ENCODE measurements at regions of chr3 and their contacts with region 1.

Region 1: DNA sequence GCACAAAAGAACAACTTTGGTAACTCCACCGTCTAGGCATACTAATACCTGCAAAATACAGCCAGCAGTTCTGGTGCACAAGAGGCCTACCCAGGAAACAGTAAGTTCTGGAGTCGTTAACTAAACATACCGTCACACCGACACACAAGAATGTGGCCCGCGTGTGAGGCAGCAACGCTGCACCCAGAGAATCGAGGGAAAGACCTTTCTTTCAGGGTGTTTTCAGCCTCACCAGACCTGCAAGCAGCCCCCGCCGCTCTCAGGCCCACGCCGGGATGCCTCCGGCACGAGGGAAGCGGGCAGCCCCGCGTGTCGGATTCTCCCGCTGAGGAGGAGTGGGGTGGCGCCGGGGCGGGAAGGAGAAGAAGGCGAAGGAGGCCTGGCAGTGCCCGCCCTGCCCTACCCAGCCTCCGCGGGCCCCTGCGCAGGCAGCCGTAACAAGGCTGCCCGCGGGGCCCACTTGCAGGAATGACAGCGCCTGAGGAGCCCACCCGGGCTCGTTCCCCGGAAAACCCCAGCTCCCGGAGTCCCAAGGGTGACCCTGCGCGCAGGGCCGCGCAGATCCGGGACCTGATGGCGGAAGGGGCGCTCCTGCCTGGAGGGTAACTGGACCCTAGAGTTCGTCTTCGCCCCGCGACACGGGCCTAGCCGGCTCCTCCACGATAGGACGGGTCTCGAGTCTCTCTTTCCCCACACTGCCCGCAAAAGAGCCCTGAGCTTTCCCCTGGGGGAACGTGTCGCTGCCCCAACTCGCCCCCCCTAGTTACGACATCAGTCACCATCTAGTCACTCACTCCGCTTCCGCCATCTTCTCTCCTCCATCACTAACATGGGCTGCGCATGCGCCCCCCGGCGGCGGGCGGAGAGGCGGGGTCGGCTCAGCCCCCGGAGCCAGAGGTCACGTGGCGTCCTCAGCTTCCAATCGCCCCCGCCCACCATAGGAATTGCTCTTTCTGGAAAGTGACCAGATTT is at the start of gene PHC3:
- ATAC-seq: peak; percentile 76 to 94 (median 91)
- H3K4me3 ChIP-seq: peak within 1 kb of the TSS; percentile 74 to 99 (median 94)
- H3K27ac ChIP-seq: peak within 1 kb of the TSS; percentile 88 to 96
- H3K4me1 ChIP-seq: peaks cover 7 to 14% of the 10 kb centered on the region in 2 donors
- total RNA-seq, gene PHC3: 12.4 to 58.5 (median 24.6) TPM

Region 2: DNA sequence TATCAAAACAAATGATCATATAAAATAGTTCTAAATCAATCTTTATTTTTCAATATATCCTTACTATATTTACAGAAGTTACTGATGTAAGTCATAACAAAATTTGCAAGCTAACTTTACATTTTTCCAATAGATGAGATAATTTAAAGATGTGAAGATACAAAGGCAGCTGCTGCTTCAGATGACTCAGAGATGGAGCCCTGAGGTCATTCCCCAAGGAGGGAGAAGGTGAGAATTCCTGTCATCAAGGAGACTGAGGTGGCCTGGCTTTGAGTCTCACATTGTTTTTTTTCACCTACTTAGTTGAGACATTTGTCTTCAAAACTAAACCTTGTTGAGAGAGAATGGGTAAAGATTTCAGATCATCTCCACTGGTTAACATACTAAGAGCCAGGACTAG is 273.7 kb before region 1 on chr3:
- in situ Hi-C with region 1: no loop called
- ATAC-seq: peak in 2 of 8 experiments; percentile 24 to 38
- H3K4me3 ChIP-seq: no peak overlapping the region
- H3K27ac ChIP-seq: no peak overlapping the region
- H3K4me1 ChIP-seq: no peaks in the 10 kb centered on the region

Region 3: GRCh38 chr3:170357176-170357919 is 176.2 kb after region 1 on chr3 and contains the start of gene SKIL:
- in situ Hi-C with region 1: loop called in 1 of 9 experiments (anchors 25 kb)
- ATAC-seq: peak; percentile 59 to 84 (median 76)
- H3K4me3 ChIP-seq: peak within 1 kb of the TSS; percentile 58 to 86 (median 68)
- H3K27ac ChIP-seq: peak within 1 kb of the TSS; percentile 94 to 95
- H3K4me1 ChIP-seq: peaks cover 34 to 47% of the 10 kb centered on the region in 2 donors
- total RNA-seq, gene SKIL: 36.3 to 132 (median 58.3) TPM

Region 4: DNA sequence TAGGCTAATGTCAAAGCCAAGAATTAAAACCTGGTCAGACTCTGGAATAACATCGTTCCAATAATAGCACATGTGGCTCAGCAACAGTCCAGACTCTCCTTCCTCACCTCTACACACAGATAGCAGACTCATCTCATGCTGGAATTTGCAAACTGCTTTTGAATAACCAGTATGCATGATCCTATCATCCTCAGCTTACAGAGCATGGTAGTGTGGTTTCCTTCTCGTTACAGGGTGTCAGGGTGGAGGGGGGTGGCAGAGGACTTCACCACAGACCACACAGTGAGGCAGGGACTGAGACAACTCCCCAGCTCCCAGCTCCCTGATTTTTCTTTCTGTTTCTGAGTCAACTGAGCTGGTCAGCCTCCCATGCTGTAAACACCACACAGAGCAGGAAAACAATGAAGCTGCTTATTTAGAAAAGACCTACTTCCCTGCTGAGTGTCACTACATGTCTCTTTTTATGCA is 587.2 kb after region 1 on chr3:
- in situ Hi-C with region 1: no loop called
- ATAC-seq: peak in 5 of 8 experiments; percentile 22 to 91 (median 86)
- H3K4me3 ChIP-seq: no peak overlapping the region
- H3K27ac ChIP-seq: no peak overlapping the region
- H3K4me1 ChIP-seq: no peaks in the 10 kb centered on the region